ENCODE measurements at regions of chr16 and their contacts with region 1.

Region 1: DNA sequence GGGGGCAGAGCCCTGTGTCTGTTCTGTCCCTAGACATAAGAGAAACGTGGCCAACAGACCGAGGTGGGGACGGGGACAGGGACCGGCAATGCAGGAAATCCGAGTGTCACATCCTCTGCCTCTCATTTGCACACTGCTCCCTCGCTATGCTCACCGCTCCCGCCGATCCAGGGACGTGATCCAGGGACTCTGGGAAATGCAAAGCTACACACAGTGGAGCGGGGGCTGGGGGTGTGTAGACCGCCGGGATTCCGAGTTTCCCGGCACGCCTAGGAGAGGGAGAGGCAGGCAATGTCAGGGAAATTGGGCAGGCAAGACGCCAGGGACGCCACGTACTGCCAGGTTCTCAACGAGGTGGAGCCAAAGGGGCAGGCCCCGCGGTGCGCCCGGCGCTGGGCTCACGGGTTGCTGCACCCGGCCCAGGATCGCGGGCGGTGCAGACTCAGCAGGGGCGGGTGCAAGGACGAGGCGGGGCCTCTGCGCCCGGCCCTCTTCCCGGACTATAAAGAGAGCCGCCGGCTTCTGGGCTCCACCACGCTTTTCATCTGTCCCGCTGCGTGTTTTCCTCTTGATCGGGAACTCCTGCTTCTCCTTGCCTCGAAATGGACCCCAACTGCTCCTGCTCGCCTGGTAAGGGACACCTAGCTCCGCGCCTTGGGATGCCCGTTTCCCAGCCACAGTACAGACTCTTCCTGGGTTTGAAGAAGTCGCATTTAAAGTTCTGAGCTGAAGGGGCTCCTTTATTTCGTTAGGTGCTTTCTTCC is at the start of gene MT1X:
- DNase-seq: peak; percentile 73 to 91
- H3K4me3 ChIP-seq: peak within 1 kb of the TSS; percentile 79
- H3K27ac ChIP-seq: no peak within 1 kb of the TSS
- H3K4me1 ChIP-seq: peaks cover 36% of the 10 kb centered on the region
- H3K27me3 ChIP-seq: no peaks in the 10 kb centered on the region
- CTCF ChIP-seq: no peak
- total RNA-seq, gene MT1X: 18.9 and 41.2 TPM in 2 replicates

Region 2: GRCh38 chr16:56643080-56643778 is 38.9 kb before region 1 on chr16:
- CTCF ChIA-PET with region 1: no interaction called
- POLR2A ChIA-PET with region 1: no interaction called
- intact Hi-C with region 1: loop called (anchors 5 kb)
- DNase-seq: peak; percentile 69 to 79
- H3K4me3 ChIP-seq: peak overlapping the region; percentile 32; the same call in 1 of the 2 replicates
- H3K27ac ChIP-seq: no peak overlapping the region
- H3K4me1 ChIP-seq: peaks cover 34% of the 10 kb centered on the region
- H3K27me3 ChIP-seq: no peaks in the 10 kb centered on the region
- CTCF ChIP-seq: peak; percentile 54

Region 3: GRCh38 chr16:56657555-56658326 is 24.4 kb before region 1 on chr16 and contains the start of gene MT1F:
- CTCF ChIA-PET with region 1: interaction called, 5 read pairs
- POLR2A ChIA-PET with region 1: interaction called, 4 read pairs
- intact Hi-C with region 1: loop called (anchors 1 kb)
- DNase-seq: peak; percentile 81 to 83
- H3K4me3 ChIP-seq: peak within 1 kb of the TSS; percentile 55
- H3K27ac ChIP-seq: no peak within 1 kb of the TSS
- H3K4me1 ChIP-seq: peaks cover 19% of the 10 kb centered on the region
- H3K27me3 ChIP-seq: peaks cover 11% of the 10 kb centered on the region
- CTCF ChIP-seq: no peak
- total RNA-seq, gene MT1F: 4.0 and 10.3 TPM in 2 replicates